ENCODE measurements at regions of chr17 and their contacts with region 1.

Region 1: GRCh38 chr17:30378824-30379302 is at the start of gene CPD:
- DNase-seq: peak; percentile 97
- ATAC-seq: peak; percentile 97
- H3K4me3 Mint-ChIP-seq: peak within 1 kb of the TSS; percentile 84
- H3K27ac Mint-ChIP-seq: peak within 1 kb of the TSS; percentile 67
- H3K4me1 Mint-ChIP-seq: peaks cover 29% of the 10 kb centered on the region
- H3K27me3 Mint-ChIP-seq: peaks cover 38% of the 10 kb centered on the region
- CTCF ChIP-seq: no peak
- total RNA-seq, gene CPD: 8.2 and 8.6 TPM in 2 replicates

Region 2: GRCh38 chr17:30116661-30117551 is 262.0 kb before region 1 on chr17 and contains the start of gene NSRP1:
- CTCF ChIA-PET with region 1: no interaction called
- POLR2A ChIA-PET with region 1: no interaction called
- intact Hi-C with region 1: loop called (anchors 2 kb)
- DNase-seq: peak; percentile 84
- ATAC-seq: peak; percentile 96
- H3K4me3 Mint-ChIP-seq: peak within 1 kb of the TSS; percentile 97
- H3K27ac Mint-ChIP-seq: peak within 1 kb of the TSS; percentile 97
- H3K4me1 Mint-ChIP-seq: peaks cover 41% of the 10 kb centered on the region
- H3K27me3 Mint-ChIP-seq: no peaks in the 10 kb centered on the region
- CTCF ChIP-seq: no peak
- total RNA-seq, gene NSRP1: 35.3 and 44.2 TPM in 2 replicates

Region 3: GRCh38 chr17:30291543-30292285 is 87.1 kb before region 1 on chr17 and contains the start of gene BLMH:
- CTCF ChIA-PET with region 1: no interaction called
- POLR2A ChIA-PET with region 1: no interaction called
- intact Hi-C with region 1: loop called (anchors 2 kb)
- DNase-seq: peak; percentile 74
- ATAC-seq: peak; percentile 97
- H3K4me3 Mint-ChIP-seq: peak within 1 kb of the TSS; percentile 91
- H3K27ac Mint-ChIP-seq: peak within 1 kb of the TSS; percentile 51
- H3K4me1 Mint-ChIP-seq: peaks cover 12% of the 10 kb centered on the region
- H3K27me3 Mint-ChIP-seq: no peaks in the 10 kb centered on the region
- CTCF ChIP-seq: no peak
- total RNA-seq, gene BLMH: 38.0 and 40.3 TPM in 2 replicates

Region 4: DNA sequence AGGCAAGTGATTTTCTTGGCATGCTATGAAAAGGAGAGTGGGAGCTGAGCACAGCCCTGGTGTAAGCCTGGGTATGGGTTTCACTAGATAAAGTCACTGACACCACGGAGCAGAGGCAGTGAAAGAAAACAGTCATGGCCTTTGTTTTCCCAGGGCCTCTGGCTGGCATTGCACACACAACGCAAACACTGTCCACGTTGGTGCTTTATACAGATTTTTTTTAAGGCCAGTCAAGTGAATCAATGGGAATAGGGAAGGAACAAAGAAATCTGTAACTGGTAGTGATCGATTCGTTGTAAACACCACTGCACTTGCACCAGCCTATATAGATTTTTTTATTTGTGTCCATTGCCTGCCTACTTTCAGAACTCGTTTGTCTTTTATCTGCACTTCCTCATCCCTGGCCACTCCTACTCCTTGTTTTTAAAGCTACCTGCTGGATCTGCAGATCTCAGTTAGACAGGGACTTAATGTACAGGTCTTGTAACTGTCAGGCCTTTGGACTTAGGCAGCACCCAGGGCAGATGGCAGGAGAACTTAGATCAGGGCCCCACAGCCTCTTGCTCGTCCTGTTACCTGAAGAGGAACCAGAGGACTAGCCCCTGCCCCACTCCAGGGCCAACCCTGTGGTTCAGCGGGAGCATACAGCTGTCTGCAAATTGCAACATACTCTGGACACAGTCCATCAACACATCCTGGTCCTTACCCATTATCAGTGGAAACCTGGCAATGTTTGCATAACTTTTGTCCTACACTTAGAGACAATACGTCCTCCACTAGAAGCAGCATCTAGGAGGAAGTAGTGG is 34.4 kb before region 1 on chr17:
- CTCF ChIA-PET with region 1: no interaction called
- POLR2A ChIA-PET with region 1: no interaction called
- intact Hi-C with region 1: loop called (anchors 5 kb)
- DNase-seq: no peak
- ATAC-seq: no peak
- H3K4me3 Mint-ChIP-seq: no peak overlapping the region
- H3K27ac Mint-ChIP-seq: no peak overlapping the region
- H3K4me1 Mint-ChIP-seq: peaks cover 6% of the 10 kb centered on the region
- H3K27me3 Mint-ChIP-seq: peaks cover 2% of the 10 kb centered on the region
- CTCF ChIP-seq: no peak

Region 5: DNA sequence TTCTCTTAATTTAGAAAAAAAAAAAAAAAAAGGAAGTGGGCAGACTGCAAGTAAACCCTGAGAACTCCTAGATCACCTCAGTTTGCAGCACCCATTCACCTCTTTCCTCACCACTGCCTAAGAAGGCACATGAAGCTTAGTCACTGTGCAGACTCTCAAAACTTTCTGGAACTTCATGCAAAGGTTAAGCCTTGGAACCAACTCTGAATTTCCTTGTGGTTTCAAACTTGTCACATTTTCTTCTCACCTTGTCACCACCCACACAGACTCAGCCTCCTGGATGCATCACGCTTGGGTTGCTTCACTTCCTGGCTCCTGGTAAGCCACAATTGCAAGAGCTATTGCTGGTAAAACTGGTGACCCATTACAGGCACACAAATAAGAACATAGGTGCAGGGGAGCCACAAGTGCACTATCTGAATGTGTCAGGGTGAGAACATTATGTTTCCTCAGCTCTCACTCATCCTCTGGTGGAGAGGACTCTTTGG is 15.1 kb before region 1 on chr17:
- CTCF ChIA-PET with region 1: no interaction called
- POLR2A ChIA-PET with region 1: interaction called, 10 read pairs
- intact Hi-C with region 1: loop called (anchors 2 kb)
- DNase-seq: peak; percentile 21
- ATAC-seq: peak; percentile 88
- H3K4me3 Mint-ChIP-seq: peak overlapping the region; percentile 28
- H3K27ac Mint-ChIP-seq: peak overlapping the region; percentile 44
- H3K4me1 Mint-ChIP-seq: peaks cover 20% of the 10 kb centered on the region
- H3K27me3 Mint-ChIP-seq: peaks cover 2% of the 10 kb centered on the region
- CTCF ChIP-seq: no peak

Region 6: GRCh38 chr17:30576326-30576861 is 197.5 kb after region 1 on chr17:
- CTCF ChIA-PET with region 1: no interaction called
- POLR2A ChIA-PET with region 1: no interaction called
- intact Hi-C with region 1: no loop called
- DNase-seq: no peak
- ATAC-seq: no peak
- H3K4me3 Mint-ChIP-seq: no peak overlapping the region
- H3K27ac Mint-ChIP-seq: no peak overlapping the region
- H3K4me1 Mint-ChIP-seq: no peaks in the 10 kb centered on the region
- H3K27me3 Mint-ChIP-seq: no peaks in the 10 kb centered on the region
- CTCF ChIP-seq: no peak

Region 7: DNA sequence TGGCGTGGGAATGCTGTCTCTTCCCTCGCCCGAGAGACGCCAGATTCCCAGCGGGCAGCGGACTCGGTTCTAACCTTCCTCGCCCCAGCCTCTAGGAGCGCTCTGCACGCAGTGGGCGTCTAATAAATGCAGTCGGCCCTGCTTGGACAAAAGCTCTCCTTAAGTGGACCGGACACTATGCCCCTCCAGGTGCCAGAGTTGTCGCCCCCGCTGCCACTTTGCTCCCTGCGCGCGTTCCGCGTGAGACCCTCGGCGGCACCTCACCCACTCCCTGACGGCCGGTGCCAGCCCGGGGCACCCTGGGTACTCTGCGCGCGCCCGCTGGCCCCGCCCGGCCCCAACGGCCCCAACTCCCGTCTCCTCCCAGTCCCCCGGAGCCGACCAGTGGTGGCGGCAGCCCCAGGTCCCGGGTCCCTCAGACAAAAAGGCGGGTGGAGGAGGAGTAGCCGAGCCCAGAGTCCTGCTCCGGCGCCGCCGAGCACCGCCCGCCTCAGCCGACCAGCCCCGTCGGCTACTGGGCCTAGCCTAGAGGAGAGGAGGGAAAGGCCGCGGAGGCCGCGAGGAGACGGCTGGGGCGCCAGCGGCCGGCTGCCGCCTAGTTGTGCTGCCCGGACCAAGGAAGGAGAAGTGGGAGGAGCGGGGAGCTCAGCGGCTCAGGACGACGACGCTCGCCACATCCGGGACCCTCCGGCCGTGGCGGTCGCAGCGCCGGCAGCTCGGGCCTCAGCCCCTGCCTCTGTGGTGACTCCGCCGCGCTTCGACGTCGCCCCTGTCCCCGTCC is 221.4 kb after region 1 on chr17:
- CTCF ChIA-PET with region 1: no interaction called
- POLR2A ChIA-PET with region 1: no interaction called
- intact Hi-C with region 1: loop called (anchors 2 kb)
- DNase-seq: peak; percentile 80
- ATAC-seq: peak; percentile 90
- H3K4me3 Mint-ChIP-seq: peak overlapping the region; percentile 98
- H3K27ac Mint-ChIP-seq: peak overlapping the region; percentile 76
- H3K4me1 Mint-ChIP-seq: peaks cover 29% of the 10 kb centered on the region
- H3K27me3 Mint-ChIP-seq: no peaks in the 10 kb centered on the region
- CTCF ChIP-seq: no peak

Measured in activated B cell treated with CpG ODN at 0.5 μM for 24 hours (primary cell).